ENCODE measurements at regions of chr14 and their contacts with region 1.

Region 1: GRCh38 chr14:32252030-32252670 is 49.1 kb upstream of the RNU6-8 start:
- DNase-seq: peak in 1 of 2 donors; percentile 69
- ATAC-seq: peak; percentile 72 to 90 (median 83)
- H3K4me3 ChIP-seq: no peak overlapping the region
- H3K27ac ChIP-seq: peak overlapping the region in 5 of 10 donors; percentile 8 to 44 (median 23)
- H3K4me1 ChIP-seq: peaks cover 0 to 37% (median 9%) of the 10 kb centered on the region in 9 donors
- H3K27me3 ChIP-seq: no peaks in the 10 kb centered on the region
- CTCF ChIP-seq: peak; percentile 61 to 93 (median 83)

Region 2: DNA sequence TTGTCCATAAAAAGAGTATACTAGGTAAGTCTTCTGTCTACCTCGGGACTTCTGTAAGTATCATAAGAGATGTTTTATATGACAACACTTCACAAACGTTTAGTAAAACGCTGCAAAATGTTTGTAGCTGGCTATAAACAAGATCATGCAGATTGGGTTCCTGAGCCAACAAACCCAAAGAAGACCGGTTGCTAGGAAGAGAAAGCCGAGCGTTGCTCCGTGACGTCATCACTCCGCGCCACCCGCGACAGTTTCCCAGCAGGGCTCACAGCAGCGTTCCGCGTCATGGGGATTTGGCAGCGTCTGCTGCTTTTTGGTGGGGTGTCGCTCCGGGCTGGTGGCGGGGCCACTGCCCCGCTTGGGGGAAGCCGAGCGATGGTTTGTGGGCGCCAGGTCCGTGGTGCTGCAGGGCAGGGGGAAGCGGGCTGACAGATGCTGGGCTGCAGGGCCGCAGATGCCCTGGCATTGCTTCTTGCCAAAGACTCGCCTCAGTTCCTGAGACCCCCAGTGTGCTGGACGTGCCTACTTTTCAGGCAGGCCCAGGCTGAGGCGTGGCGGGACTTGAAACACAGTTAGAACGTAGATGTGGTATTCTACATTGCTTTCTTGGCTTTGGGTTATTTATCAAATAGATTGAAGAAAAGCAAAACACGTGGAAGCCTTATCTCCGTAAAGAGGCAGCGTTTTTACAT is 690.8 kb before region 1 on chr14 and contains the start of gene NUBPL:
- intact Hi-C with region 1: loop called in 1 of 10 experiments (anchors 5 kb)
- DNase-seq: peak; percentile 97 to 98
- ATAC-seq: peak; percentile 96 to 99 (median 98)
- H3K4me3 ChIP-seq: peak within 1 kb of the TSS; percentile 65 to 91 (median 79)
- H3K27ac ChIP-seq: peak within 1 kb of the TSS; percentile 15 to 95 (median 84)
- H3K4me1 ChIP-seq: peaks cover 0 to 29% (median 9%) of the 10 kb centered on the region in 9 donors
- H3K27me3 ChIP-seq: no peaks in the 10 kb centered on the region
- CTCF ChIP-seq: no peak
- total RNA-seq, gene NUBPL: 19.3 to 32.0 (median 24.7) TPM

Region 3: GRCh38 chr14:31937721-31938346 is 314.3 kb before region 1 on chr14:
- intact Hi-C with region 1: loop called (anchors 2 to 10 kb)
- DNase-seq: peak in 1 of 2 donors; percentile 55
- ATAC-seq: peak; percentile 62 to 98 (median 80)
- H3K4me3 ChIP-seq: no peak overlapping the region
- H3K27ac ChIP-seq: peak overlapping the region in 1 of 10 donors; percentile 33
- H3K4me1 ChIP-seq: peaks cover 0 to 37% (median 18%) of the 10 kb centered on the region in 9 donors
- H3K27me3 ChIP-seq: no peaks in the 10 kb centered on the region
- CTCF ChIP-seq: no peak

Region 4: DNA sequence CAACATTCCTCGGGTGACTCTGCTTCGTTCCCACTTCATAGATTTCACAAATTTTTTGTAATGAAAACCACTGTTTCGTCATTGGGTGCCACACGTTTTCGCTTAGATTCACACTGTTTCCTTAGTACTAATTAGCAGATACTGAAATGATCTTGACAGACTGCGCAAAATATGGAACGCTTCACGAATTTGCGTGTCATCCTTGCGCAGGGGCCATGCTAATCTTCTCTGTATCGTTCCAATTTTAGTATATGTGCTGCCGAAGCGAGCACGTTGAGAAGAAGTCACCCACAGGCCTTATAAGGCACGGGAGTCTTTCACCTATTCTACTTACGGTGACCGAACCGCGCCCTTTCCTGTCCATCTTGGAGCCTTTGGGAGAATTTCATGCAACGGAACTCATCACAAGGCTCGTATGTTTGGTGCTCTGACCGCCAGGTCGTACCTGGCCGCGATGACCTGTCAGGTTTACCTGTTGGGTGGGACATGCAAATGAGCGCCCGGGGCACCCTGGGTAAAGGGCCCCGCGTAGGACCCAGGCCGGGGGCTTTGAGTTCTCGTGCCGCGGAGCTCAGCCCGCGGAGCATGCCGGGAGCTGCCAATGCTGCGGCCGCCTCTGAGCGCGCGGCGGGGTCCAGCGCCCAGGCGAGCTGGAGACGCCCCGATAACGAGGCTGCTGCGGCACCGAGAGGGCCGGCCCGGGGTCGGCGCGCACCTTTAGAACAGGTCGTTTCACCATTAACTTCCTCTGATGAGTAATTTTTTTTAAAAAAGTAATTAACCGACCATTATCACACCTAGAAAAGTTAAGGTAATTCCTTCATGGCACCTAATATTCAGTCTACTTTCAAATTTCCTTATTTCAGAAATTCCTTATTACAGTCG is 48.9 kb before region 1 on chr14 and contains the start of gene RNU6-8:
- intact Hi-C with region 1: loop called in 1 of 10 experiments (anchors 5 kb)
- DNase-seq: peak; percentile 83 to 88
- ATAC-seq: peak; percentile 90 to 95 (median 93)
- H3K4me3 ChIP-seq: peak within 1 kb of the TSS; percentile 36 to 77 (median 66)
- H3K27ac ChIP-seq: peak within 1 kb of the TSS; percentile 64 to 94 (median 90)
- H3K4me1 ChIP-seq: peaks cover 0 to 42% (median 15%) of the 10 kb centered on the region in 9 donors
- H3K27me3 ChIP-seq: peaks cover 0 to 29% (median 0%) of the 10 kb centered on the region in 7 donors
- CTCF ChIP-seq: peak in 1 of 9 donors; percentile 12
- total RNA-seq, gene RNU6-8: not detected

Region 5: GRCh38 chr14:32560209-32560857 is 308.2 kb after region 1 on chr14:
- intact Hi-C with region 1: loop called in 1 of 10 experiments (anchors 10 kb)
- DNase-seq: peak in 1 of 2 donors; percentile 55
- ATAC-seq: peak; percentile 49 to 86 (median 74)
- H3K4me3 ChIP-seq: no peak overlapping the region
- H3K27ac ChIP-seq: peak overlapping the region in 6 of 10 donors; percentile 5 to 58 (median 47)
- H3K4me1 ChIP-seq: peaks cover 7 to 49% (median 29%) of the 10 kb centered on the region in 9 donors
- H3K27me3 ChIP-seq: no peaks in the 10 kb centered on the region
- CTCF ChIP-seq: peak; percentile 30 to 87 (median 81)